HCT116 (cell line): ENCODE measurements at regions of chr1 and their contacts with region 1.

Region 1: GRCh38 chr1:15038232-15039016 is 115.1 kb upstream of the TMEM51 start:
- DNase-seq: peak; percentile 77
- ATAC-seq: peak; percentile 96
- H3K4me3 ChIP-seq: no peak overlapping the region
- H3K27ac ChIP-seq: no peak overlapping the region
- H3K4me1 ChIP-seq: peaks cover 0 to 2% of the 10 kb centered on the region in 2 experiments; a peak in 1 of 4 replicates
- H3K27me3 ChIP-seq: no peaks in the 10 kb centered on the region
- CTCF ChIP-seq: peak; percentile 65 to 73 (median 69)
- POLR2A ChIP-seq: no peak
- RAD21 ChIP-seq: peak; percentile 59

Region 2: GRCh38 chr1:15100121-15100874 is 61.9 kb after region 1 on chr1:
- CTCF ChIA-PET with region 1: no interaction called
- POLR2A ChIA-PET with region 1: no interaction called
- RAD21 ChIA-PET with region 1: no interaction called
- intact Hi-C with region 1: loop called (anchors 2 kb)
- DNase-seq: peak; percentile 37
- ATAC-seq: peak; percentile 93
- H3K4me3 ChIP-seq: no peak overlapping the region
- H3K27ac ChIP-seq: no peak overlapping the region
- H3K4me1 ChIP-seq: no peaks in the 10 kb centered on the region
- H3K27me3 ChIP-seq: peaks cover 12% of the 10 kb centered on the region; the same call in 1 of the 2 replicates
- CTCF ChIP-seq: peak; percentile 81 to 98 (median 97)
- POLR2A ChIP-seq: no peak
- RAD21 ChIP-seq: peak; percentile 97

Region 3: DNA sequence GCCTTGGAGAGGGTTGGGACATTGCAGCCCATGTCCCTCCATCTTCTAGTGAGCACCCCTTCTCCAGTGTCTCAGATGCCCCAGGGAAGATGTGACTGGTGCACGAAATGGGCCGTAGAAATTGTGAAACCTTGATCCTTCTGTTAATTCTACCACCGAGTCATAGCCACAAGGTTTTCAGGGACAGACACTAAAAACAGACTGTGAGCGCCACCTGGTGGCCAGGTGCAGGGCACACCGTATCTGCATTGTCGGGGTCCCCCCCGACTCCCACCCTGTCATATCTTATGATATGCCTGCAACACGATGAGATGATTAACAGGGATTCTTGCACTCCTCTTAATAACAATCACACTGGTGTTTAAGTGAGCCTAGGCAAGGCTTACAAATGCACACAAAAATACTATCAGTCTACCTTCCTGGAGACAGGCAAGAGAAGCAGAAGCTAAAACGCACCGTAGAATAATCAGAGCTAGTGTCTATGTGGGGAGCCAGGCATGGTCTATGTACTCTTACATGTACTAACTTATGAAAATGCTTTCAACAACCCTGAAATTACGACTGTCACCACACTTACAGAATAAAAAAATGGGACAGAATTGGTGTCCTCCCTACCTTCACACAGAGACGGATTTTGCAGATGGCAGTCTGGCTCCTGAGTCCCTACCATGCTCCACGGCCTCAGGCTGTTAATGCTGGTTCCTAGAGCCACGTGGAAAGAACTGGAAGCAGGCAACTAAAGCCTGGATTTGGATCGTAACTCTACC is 266.5 kb after region 1 on chr1:
- CTCF ChIA-PET with region 1: no interaction called
- POLR2A ChIA-PET with region 1: no interaction called
- RAD21 ChIA-PET with region 1: no interaction called
- intact Hi-C with region 1: loop called (anchors 5 kb)
- DNase-seq: peak; percentile 26
- ATAC-seq: peak; percentile 95
- H3K4me3 ChIP-seq: no peak overlapping the region
- H3K27ac ChIP-seq: no peak overlapping the region
- H3K4me1 ChIP-seq: peaks cover 0 to 6% of the 10 kb centered on the region in 2 experiments; a peak in 2 of 4 replicates
- H3K27me3 ChIP-seq: no peaks in the 10 kb centered on the region
- CTCF ChIP-seq: peak; percentile 70 to 100 (median 86)
- POLR2A ChIP-seq: no peak
- RAD21 ChIP-seq: peak; percentile 90